ENCODE measurements at regions of chr13 and their contacts with region 1.

Region 1: DNA sequence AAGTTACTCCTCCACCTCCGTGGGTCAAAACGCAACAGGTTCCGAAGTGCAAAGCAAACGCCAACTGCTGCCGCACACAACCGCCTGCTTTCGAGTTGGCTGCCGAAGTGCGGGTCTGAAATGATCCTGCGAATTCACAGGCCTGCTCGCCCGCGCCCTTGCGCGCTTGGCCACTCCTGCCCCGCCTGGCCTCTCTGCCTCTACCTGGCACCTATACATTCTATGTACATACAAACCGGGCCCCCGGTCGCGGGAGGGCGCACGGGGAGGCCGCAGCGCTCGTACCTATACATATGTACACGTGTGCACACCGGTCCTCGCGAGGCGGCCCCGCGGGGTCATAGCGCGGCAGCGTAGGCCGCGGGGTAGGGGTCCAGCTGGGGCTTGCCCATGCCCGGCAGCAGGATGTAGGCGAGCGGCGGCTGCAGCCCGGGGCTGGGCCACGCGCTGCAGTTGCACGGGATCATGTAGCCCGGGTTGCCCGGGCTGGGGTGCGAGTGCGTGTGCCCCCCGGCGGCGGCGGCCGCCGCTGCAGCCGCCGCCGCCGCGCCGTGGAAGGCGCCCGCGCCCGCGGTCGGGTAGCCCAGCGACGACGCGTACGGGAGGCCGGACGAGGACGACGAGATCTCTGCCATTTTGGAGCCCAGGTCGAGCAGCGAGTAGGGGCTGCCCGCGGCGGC is 1.3 kb downstream of the SOX21 start:
- ATAC-seq: peak in 7 of 8 experiments; percentile 2 to 55 (median 37)
- H3K4me3 ChIP-seq: peak overlapping the region; percentile 40 to 72 (median 44)
- H3K27ac ChIP-seq: peak overlapping the region; percentile 33 to 85
- H3K4me1 ChIP-seq: peaks cover 1 to 4% of the 10 kb centered on the region in 2 donors

Region 2: DNA sequence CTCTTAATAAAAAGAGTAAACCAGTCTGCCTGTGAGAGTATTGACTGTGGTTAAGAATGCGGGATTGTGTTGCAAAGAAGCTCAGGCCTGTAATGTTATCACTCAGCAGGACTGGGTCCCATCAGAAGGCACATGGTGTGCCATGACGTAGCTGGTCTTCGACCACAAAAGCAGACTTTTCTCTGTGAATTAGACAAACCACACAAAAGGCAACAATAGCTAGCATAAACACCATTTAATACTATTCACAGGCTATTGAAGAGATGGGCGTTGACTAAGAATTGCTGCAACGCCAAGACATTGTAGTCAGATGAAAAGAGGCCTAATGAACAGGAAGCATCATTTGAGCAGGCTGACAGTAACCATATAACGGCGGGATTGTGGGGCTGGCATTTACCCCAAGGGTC is 236.9 kb after region 1 on chr13:
- in situ Hi-C with region 1: loop called in 1 of 9 experiments (anchors 25 kb)
- ATAC-seq: peak in 6 of 8 experiments; percentile 32 to 94 (median 94)
- H3K4me3 ChIP-seq: no peak overlapping the region
- H3K27ac ChIP-seq: no peak overlapping the region
- H3K4me1 ChIP-seq: peaks cover 15 to 17% of the 10 kb centered on the region in 2 donors

Region 3: DNA sequence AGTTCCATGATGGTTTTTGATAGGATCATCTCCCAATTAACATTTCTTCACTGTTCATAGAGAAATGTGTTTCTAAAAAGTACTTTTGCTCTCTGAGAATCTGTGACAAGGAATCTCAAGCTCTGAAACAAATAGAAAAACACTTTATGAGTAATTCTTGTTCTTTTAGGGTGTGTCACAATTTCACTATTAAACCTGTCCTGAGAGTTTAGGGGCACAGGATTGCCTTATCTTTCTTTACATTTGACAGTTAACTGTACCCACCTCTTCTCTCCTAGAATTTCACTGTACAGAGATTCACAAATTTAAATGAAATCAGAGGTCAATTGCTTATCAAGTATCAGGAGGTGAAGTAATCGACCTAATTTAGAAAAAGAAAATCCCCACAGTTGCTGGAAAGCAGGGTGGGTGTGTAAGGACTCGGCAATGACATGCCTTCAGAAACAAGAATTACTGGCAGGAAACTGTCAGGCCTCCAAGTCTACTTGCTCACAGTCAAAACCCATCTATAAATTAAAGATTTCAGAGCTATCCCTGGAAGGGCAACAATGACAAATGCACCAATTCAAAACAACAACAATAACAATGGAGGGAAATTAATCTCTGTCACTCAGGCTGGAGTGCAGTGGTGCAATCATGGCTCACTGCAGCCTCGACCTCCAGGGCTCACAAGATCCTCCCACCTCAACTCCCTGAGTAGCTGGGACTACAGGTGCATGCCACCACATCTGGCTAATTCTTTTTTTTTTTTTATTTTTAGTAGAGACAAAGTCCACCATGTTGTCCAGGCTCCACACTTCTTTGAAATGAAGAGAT is 340.0 kb after region 1 on chr13:
- in situ Hi-C with region 1: no loop called
- ATAC-seq: peak in 6 of 8 experiments; percentile 29 to 74 (median 66)
- H3K4me3 ChIP-seq: no peak overlapping the region
- H3K27ac ChIP-seq: no peak overlapping the region
- H3K4me1 ChIP-seq: peaks cover 0 to 5% of the 10 kb centered on the region in 2 donors

Region 4: DNA sequence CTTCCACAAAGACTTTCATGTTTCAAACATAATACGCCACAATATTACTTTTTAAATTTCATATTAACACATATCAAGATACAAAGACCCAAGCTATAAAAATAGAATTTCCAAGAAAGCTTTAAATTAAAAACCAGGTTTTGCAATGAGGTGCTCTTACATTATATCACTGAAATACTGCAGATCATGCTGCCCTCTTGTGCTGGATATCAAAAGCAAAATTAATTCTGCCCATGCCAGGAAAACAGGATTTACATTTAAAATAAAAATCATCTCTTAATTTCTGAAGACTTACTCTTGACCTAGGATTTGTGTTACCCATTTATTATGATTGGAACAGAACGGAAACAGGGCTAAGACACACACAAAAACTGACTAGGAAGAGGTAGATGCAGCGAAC is 445.2 kb after region 1 on chr13:
- in situ Hi-C with region 1: loop called in 1 of 9 experiments (anchors 25 kb)
- ATAC-seq: no peak
- H3K4me3 ChIP-seq: no peak overlapping the region
- H3K27ac ChIP-seq: no peak overlapping the region
- H3K4me1 ChIP-seq: peaks cover 13 to 23% of the 10 kb centered on the region in 2 donors

Measured in motor neuron (in vitro differentiated cells).